PC-9 (cell line): ENCODE measurements at regions of chr2 and their contacts with region 1.

Region 1: GRCh38 chr2:236334122-236334876 is 70.1 kb upstream of the ASB18 start:
- DNase-seq: no peak
- H3K4me3 ChIP-seq: no peak overlapping the region
- H3K27ac ChIP-seq: no peak overlapping the region
- H3K4me1 ChIP-seq: no peaks in the 10 kb centered on the region
- H3K27me3 ChIP-seq: peaks cover 90% of the 10 kb centered on the region
- CTCF ChIP-seq: no peak

Region 2: GRCh38 chr2:236485519-236485918 is 151.2 kb after region 1 on chr2:
- CTCF ChIA-PET with region 1: no interaction called
- POLR2A ChIA-PET with region 1: interaction called, 30 read pairs
- intact Hi-C with region 1: no loop called
- DNase-seq: no peak
- H3K4me3 ChIP-seq: no peak overlapping the region
- H3K27ac ChIP-seq: no peak overlapping the region
- H3K4me1 ChIP-seq: no peaks in the 10 kb centered on the region
- H3K27me3 ChIP-seq: no peaks in the 10 kb centered on the region; the same call in 1 of the 2 replicates
- CTCF ChIP-seq: no peak

Region 3: GRCh38 chr2:236663287-236664101 is 329.2 kb after region 1 on chr2:
- CTCF ChIA-PET with region 1: no interaction called
- POLR2A ChIA-PET with region 1: no interaction called
- intact Hi-C with region 1: no loop called
- DNase-seq: peak in 1 of 2 experiments; percentile 25
- H3K4me3 ChIP-seq: no peak overlapping the region
- H3K27ac ChIP-seq: no peak overlapping the region
- H3K4me1 ChIP-seq: peaks cover 29% of the 10 kb centered on the region
- H3K27me3 ChIP-seq: peaks cover 8% of the 10 kb centered on the region
- CTCF ChIP-seq: no peak